ENCODE measurements at regions of chr3 and their contacts with region 1.

Region 1: GRCh38 chr3:5122030-5122740 is at the start of gene ARL8B:
- DNase-seq: peak; percentile 98
- total RNA-seq, gene ARL8B: 63.0 to 65.9 TPM

Region 2: DNA sequence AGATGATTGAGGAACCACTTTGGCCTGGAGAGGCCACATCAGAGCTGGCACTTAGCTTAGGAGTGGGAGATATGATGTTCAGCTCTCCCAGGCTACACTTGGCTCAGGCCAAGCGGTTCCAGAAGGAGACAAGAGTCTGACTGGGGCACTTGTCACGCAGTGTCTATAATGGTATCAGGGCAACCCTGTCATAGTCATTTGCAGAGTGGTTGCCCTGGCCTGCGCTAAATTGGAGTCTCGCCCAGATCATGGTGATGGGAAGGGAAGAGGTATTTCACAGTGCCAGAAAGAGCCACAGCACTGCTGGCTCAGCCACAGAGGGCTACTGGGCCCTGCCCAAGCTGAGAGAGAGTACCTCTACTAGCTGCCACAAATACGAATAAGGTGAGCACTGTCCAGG is 1755.8 kb before region 1 on chr3:
- intact Hi-C with region 1: no loop called
- DNase-seq: no peak

Region 3: DNA sequence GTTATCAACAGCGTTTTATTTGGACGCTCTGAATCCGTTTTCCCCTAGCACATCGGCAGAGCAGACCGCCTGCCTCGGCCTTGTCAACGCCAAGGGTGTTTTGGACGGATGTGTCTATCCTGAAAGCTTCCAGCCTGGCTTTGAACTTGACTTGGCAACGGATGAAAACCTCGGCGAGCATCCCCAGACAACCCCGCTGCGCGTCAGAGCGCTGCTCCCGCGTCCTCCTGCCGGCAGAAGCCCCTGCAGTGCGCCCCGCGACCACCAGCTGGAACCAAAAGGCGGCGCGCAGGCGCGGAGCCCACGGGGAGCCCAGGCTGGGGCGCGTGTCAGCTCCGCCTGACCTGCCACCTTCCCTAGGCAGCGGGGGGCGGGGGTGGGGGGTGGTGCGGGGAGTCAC is 26.3 kb before region 1 on chr3:
- intact Hi-C with region 1: no loop called
- DNase-seq: peak; percentile 80

Region 4: GRCh38 chr3:5187156-5187919 is 65.2 kb after region 1 on chr3 and contains the start of gene EDEM1:
- intact Hi-C with region 1: loop called in 1 of 2 experiments (anchors 5 kb)
- DNase-seq: peak; percentile 99
- total RNA-seq, gene EDEM1: 25.0 to 28.1 TPM